CD8-positive, alpha-beta memory T cell (primary cell): ENCODE measurements at regions of chr9 and their contacts with region 1.

Region 1: DNA sequence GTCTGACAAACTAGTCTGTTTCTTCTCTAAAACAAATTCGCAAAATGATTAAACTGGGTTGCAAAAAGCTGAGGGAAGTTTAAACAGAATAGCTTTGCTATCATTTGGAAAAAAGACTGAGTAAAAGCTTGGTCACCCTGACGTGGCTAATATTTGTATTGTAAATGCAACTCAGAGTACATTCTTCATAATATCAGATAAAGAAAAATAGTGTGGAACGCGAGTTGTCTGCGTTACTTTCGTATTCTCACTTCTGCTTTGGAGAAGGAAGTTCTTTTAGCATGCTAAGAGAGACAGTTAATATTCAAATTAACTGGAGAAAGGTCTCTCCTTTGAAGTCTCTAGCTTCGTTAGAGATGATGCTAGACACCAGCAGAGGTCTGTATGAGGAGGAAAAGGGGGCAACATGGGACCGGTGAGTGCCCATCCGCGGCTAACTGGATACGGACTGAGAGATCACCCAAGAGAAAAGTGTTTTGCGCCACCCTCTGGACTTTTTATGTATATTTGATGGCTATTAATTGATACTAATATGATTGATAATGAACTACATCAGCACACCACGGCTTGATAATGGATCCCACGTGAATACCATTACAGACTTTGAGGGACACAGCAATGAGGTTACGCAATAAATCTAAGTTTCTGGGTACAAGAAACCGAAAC is 2.9 kb upstream of the CNTRL start:
- DNase-seq: peak; percentile 12 to 51 (median 24)
- H3K4me3 ChIP-seq: peak overlapping the region; percentile 72
- H3K4me3 Mint-ChIP-seq: peak overlapping the region; percentile 93 to 100 (median 97)
- H3K27ac ChIP-seq: peak overlapping the region; percentile 49
- H3K27ac Mint-ChIP-seq: peak overlapping the region; percentile 68 to 96 (median 94)
- H3K4me1 ChIP-seq: peaks cover 27% of the 10 kb centered on the region
- H3K4me1 Mint-ChIP-seq: peaks cover 44 to 63% (median 55%) of the 10 kb centered on the region in 3 donors
- H3K27me3 ChIP-seq: no peaks in the 10 kb centered on the region
- H3K27me3 Mint-ChIP-seq: no peaks in the 10 kb centered on the region

Region 2: DNA sequence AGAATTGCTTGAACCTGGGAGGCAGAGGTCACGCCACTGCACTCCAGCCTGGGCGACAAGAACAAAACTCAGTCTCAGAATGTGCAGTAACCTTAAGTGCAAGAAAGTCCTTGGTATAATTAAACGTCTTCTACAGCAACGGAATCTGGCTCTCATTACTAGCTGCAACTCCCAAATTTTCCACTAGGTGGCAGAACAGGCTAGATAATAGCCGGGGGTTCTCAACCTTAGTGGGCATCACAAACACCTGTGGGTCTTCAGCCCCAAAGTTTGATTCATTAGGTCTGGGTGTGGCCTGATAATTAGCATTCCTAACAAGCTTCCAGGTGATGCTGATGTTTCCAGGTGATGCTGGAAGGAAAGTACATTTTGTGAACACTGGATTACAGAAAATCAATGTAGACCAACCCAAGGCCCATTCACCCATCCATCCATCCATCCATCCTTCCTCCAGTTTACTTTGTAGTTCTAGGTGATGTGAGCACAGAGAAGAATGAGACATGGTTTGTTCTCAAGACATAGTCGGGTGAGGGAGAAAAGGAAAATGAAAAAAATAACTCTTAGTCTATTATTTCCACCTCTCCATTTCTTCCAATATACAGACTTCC is 316.0 kb before region 1 on chr9:
- CTCF ChIA-PET with region 1: interaction called, 29 read pairs
- POLR2A ChIA-PET with region 1: interaction called, 3 read pairs
- DNase-seq: peak; percentile 42 to 73 (median 60)
- H3K4me3 ChIP-seq: no peak overlapping the region
- H3K4me3 Mint-ChIP-seq: no peak overlapping the region
- H3K27ac ChIP-seq: no peak overlapping the region
- H3K27ac Mint-ChIP-seq: peak overlapping the region in 7 of 8 donors; percentile 12 to 68 (median 54)
- H3K4me1 ChIP-seq: no peaks in the 10 kb centered on the region
- H3K4me1 Mint-ChIP-seq: peaks cover 0 to 3% (median 0%) of the 10 kb centered on the region in 3 donors
- H3K27me3 ChIP-seq: no peaks in the 10 kb centered on the region
- H3K27me3 Mint-ChIP-seq: no peaks in the 10 kb centered on the region

Region 3: DNA sequence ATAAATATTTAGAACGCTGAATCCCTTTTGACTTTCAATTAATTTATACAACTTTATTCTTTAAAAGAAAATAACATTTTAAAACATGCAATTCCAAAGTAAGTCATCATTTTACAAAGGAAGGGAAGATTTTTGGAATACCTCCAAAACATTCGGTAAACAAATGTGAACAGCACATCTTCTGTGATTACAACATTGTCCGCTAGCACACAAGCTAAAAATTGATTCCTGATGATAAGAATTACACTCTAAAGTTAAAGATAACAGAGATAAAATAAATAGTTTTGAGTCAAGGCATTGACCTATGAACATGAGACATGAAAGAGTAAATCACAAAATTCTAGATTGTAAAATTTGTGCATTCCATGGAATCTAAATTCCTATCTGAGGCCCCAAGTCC is 89.1 kb before region 1 on chr9:
- CTCF ChIA-PET with region 1: interaction called, 18 read pairs
- POLR2A ChIA-PET with region 1: no interaction called
- DNase-seq: no peak
- H3K4me3 ChIP-seq: no peak overlapping the region
- H3K4me3 Mint-ChIP-seq: no peak overlapping the region
- H3K27ac ChIP-seq: no peak overlapping the region
- H3K27ac Mint-ChIP-seq: no peak overlapping the region
- H3K4me1 ChIP-seq: no peaks in the 10 kb centered on the region
- H3K4me1 Mint-ChIP-seq: peaks cover 0 to 8% (median 4%) of the 10 kb centered on the region in 3 donors
- H3K27me3 ChIP-seq: no peaks in the 10 kb centered on the region
- H3K27me3 Mint-ChIP-seq: peaks cover 0 to 3% of the 10 kb centered on the region in 2 donors

Region 4: GRCh38 chr9:121038804-121039203 is 33.1 kb before region 1 on chr9:
- CTCF ChIA-PET with region 1: no interaction called
- POLR2A ChIA-PET with region 1: no interaction called
- DNase-seq: no peak
- H3K4me3 ChIP-seq: no peak overlapping the region
- H3K4me3 Mint-ChIP-seq: no peak overlapping the region
- H3K27ac ChIP-seq: no peak overlapping the region
- H3K27ac Mint-ChIP-seq: peak overlapping the region in 1 of 8 donors; percentile 6
- H3K4me1 ChIP-seq: no peaks in the 10 kb centered on the region
- H3K4me1 Mint-ChIP-seq: no peaks in the 10 kb centered on the region
- H3K27me3 ChIP-seq: no peaks in the 10 kb centered on the region
- H3K27me3 Mint-ChIP-seq: peaks cover 0 to 4% of the 10 kb centered on the region in 2 donors

Region 5: GRCh38 chr9:121059998-121060636 is 11.8 kb before region 1 on chr9:
- CTCF ChIA-PET with region 1: interaction called, 24 read pairs
- POLR2A ChIA-PET with region 1: no interaction called
- DNase-seq: peak in 4 of 5 donors; percentile 10 to 49 (median 45)
- H3K4me3 ChIP-seq: no peak overlapping the region
- H3K4me3 Mint-ChIP-seq: no peak overlapping the region
- H3K27ac ChIP-seq: no peak overlapping the region
- H3K27ac Mint-ChIP-seq: no peak overlapping the region
- H3K4me1 ChIP-seq: no peaks in the 10 kb centered on the region
- H3K4me1 Mint-ChIP-seq: peaks cover 16 to 23% (median 17%) of the 10 kb centered on the region in 3 donors
- H3K27me3 ChIP-seq: no peaks in the 10 kb centered on the region
- H3K27me3 Mint-ChIP-seq: no peaks in the 10 kb centered on the region

Region 6: DNA sequence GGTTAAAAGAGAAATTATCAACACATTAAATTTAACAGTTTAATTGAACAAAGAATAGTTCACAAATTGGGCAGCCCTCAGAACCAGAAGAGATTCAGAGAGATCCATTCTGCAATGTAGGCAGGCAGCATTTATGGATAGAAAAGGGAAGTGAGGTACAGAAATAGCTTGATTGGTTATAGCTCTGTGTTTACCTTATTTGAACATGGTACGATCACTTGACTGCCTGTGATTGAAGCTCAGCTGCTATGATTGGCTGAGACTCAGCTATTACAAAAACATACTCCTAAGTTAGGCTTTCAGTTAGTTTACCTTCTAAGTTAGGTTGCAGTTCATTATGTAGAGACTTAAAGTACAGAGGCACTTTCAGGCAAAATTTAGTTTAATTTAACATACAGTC is 10.2 kb after region 1 on chr9:
- CTCF ChIA-PET with region 1: interaction called, 11 read pairs
- POLR2A ChIA-PET with region 1: interaction called, 4 read pairs
- DNase-seq: no peak
- H3K4me3 ChIP-seq: no peak overlapping the region
- H3K4me3 Mint-ChIP-seq: no peak overlapping the region
- H3K27ac ChIP-seq: no peak overlapping the region
- H3K27ac Mint-ChIP-seq: peak overlapping the region in 3 of 8 donors; percentile 15 to 47 (median 41)
- H3K4me1 ChIP-seq: peaks cover 2% of the 10 kb centered on the region
- H3K4me1 Mint-ChIP-seq: peaks cover 23 to 51% (median 50%) of the 10 kb centered on the region in 3 donors
- H3K27me3 ChIP-seq: no peaks in the 10 kb centered on the region
- H3K27me3 Mint-ChIP-seq: no peaks in the 10 kb centered on the region